Ovary (tissue), 10 donors: ENCODE measurements at regions of chr20 and their contacts with region 1.

Region 1: GRCh38 chr20:46562373-46563169 is 12.1 kb upstream of the OCSTAMP start:
- DNase-seq: peak; percentile 59 to 83 (median 75)
- H3K4me3 ChIP-seq: no peak overlapping the region
- H3K27ac ChIP-seq: peak overlapping the region in 1 of 2 donors; percentile 63
- H3K4me1 ChIP-seq: peaks cover 5% of the 10 kb centered on the region
- H3K27me3 ChIP-seq: no peaks in the 10 kb centered on the region
- CTCF ChIP-seq: peak; percentile 71 to 96 (median 79)
- EP300 ChIP-seq: no peak
- POLR2A ChIP-seq: no peak

Region 2: DNA sequence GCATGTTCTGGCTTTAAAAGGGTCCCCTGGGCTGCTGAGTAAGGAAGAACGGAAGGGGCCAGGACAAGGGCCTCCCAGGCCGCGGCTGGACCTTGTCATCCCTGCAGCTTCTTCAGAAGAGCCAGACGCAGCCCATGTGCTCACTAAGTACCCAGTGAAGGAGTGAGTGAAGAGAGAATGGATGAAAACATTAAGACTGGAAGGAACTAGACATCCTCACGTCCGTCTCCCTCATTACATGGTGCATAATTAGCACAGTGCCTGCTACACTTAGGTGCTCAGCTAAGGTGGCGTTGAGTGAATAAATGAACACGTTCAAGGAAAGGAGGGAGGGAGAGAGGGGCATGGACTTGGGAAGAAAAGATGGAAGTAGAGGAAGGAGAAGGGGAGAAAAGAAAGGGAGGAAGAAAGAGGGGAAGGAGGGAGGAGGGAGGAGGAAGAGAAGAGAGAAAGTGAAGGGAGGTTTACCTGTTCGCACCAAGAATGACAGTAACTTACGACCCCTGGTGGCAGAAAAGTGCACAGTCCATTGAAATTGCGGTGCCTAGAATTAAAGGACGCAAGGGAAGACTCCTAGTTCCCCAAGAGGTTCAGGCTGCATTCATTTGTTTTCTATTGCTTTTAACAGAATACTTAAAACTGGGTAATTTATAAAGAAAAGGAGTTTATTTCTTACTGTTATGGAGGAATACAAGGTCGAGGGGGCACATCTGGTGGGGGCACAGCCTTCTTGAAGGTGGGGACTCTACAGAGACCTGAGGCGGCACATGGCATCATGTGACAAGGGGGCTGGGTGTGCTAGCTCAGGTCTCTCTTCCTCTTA is 118.7 kb after region 1 on chr20:
- intact Hi-C with region 1: loop called in 2 of 4 experiments (anchors 5 kb)
- DNase-seq: peak; percentile 30 to 63 (median 53)
- H3K4me3 ChIP-seq: no peak overlapping the region
- H3K27ac ChIP-seq: no peak overlapping the region
- H3K4me1 ChIP-seq: peaks cover 8% of the 10 kb centered on the region
- H3K27me3 ChIP-seq: no peaks in the 10 kb centered on the region
- CTCF ChIP-seq: peak; percentile 18 to 57 (median 37)
- EP300 ChIP-seq: no peak
- POLR2A ChIP-seq: no peak